Activated CD8-positive, alpha-beta memory T cell treated with anti-CD3 and anti-CD28 coated beads, Interleukin-2, amount 10 ng/mL, durations not matched to agents 7 days and 5 days (primary cell): ENCODE measurements at regions of chr13 and their contacts with region 1.

Region 1: DNA sequence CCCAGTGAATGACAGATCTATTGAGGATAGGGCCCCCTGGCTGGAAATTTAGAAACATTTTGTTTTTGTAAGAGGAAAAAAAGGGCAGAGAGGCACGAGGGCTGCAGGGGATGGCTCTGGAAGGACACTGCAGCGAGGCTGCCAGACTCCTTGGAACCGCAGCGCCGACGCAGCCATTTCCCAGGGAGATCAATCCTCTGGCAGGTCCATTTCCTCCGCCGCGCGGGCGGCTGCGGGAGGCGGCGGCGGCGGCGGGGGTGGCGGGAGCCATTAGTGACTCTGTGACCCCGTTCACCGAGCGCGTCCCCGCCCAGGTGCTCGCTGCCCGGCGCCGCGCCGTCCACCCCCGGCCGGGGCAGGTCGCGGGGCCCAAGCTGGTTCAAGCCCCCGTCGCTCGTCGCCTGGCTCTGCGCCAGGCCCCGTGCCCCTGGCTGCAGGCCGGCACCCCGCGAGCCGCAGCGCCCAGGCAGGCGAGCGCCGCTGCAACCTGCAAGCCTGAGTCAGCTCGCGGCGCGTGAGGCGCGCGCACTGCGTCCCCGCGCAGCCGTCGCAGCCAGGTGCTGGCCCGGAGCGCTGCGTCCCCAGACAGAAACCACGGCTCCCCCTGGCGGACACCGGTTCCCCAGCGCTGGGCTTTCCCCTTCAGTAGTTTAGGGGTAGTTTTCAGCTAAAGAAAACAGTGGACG is 192.6 kb downstream of the KATNAL1 start:
- DNase-seq: peak; percentile 95
- ATAC-seq: peak; percentile 97
- H3K4me3 Mint-ChIP-seq: peak overlapping the region; percentile 71
- H3K27ac Mint-ChIP-seq: peak overlapping the region; percentile 24
- H3K4me1 Mint-ChIP-seq: peaks cover 33% of the 10 kb centered on the region
- H3K27me3 Mint-ChIP-seq: peaks cover 6% of the 10 kb centered on the region

Region 2: DNA sequence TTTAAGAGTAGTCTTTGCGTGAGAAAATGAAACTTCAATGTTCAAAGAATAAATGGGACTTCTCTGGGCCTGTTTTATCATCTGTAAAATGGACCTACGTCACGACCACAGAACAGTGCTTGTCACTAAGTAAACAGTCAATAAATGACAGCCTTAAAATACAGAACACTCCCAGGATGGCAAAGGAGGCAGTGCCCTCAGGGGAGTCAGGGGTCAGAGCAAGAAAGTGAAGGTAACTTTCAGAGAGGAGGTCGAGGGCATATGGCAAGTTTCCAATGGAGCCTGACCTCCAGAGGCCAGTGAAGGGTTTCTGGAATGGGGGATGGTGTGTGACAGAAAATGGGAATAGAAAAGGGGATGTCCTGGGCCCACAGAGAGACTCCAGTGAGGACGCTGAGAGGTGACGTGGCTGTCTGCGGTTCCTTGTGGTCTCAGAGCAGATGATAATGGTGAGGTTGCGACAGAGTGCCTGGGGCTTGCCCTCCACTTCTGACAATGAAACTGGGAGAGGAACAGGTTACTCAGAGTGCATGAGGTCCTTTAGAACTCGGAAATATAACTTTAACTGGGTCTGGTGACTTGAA is 356.1 kb before region 1 on chr13:
- CTCF ChIA-PET with region 1: interaction called, 15 read pairs
- DNase-seq: peak; percentile 80
- ATAC-seq: peak; percentile 84
- H3K4me3 Mint-ChIP-seq: peak overlapping the region; percentile 1
- H3K27ac Mint-ChIP-seq: peak overlapping the region; percentile 63
- H3K4me1 Mint-ChIP-seq: peaks cover 25% of the 10 kb centered on the region
- H3K27me3 Mint-ChIP-seq: peaks cover 2% of the 10 kb centered on the region

Region 3: GRCh38 chr13:29840585-29840984 is 274.1 kb before region 1 on chr13:
- CTCF ChIA-PET with region 1: interaction called, 27 read pairs
- DNase-seq: no peak
- ATAC-seq: no peak
- H3K4me3 Mint-ChIP-seq: no peak overlapping the region
- H3K27ac Mint-ChIP-seq: no peak overlapping the region
- H3K4me1 Mint-ChIP-seq: peaks cover 25% of the 10 kb centered on the region
- H3K27me3 Mint-ChIP-seq: no peaks in the 10 kb centered on the region

Region 4: GRCh38 chr13:29935309-29935981 is 179.3 kb before region 1 on chr13:
- CTCF ChIA-PET with region 1: interaction called, 162 read pairs
- DNase-seq: peak; percentile 96
- ATAC-seq: peak; percentile 90
- H3K4me3 Mint-ChIP-seq: peak overlapping the region; percentile 81
- H3K27ac Mint-ChIP-seq: peak overlapping the region; percentile 92
- H3K4me1 Mint-ChIP-seq: peaks cover 47% of the 10 kb centered on the region
- H3K27me3 Mint-ChIP-seq: no peaks in the 10 kb centered on the region

Region 5: DNA sequence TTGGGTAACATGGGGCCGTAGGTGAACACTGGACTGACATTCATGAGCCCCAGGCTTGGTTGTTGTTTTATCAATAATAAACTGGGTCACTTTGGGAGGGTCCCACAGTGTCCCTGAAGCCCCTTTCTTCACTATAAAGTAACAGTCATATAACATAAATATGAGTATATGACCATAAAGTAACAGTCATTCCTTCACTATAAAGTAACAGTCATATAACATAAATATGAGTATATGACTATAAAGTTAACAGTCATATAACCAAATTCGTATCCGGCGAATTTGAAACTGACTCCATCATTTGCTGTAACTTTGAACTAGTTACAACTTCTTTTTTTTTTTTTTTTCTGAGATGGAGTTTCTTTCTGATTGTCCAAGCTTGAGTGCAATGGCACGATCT is 17.6 kb before region 1 on chr13:
- CTCF ChIA-PET with region 1: interaction called, 10 read pairs
- DNase-seq: no peak
- ATAC-seq: no peak
- H3K4me3 Mint-ChIP-seq: no peak overlapping the region
- H3K27ac Mint-ChIP-seq: no peak overlapping the region
- H3K4me1 Mint-ChIP-seq: no peaks in the 10 kb centered on the region
- H3K27me3 Mint-ChIP-seq: no peaks in the 10 kb centered on the region

Region 6: GRCh38 chr13:30132623-30133553 is 18.2 kb after region 1 on chr13:
- CTCF ChIA-PET with region 1: interaction called, 60 read pairs
- DNase-seq: peak; percentile 98
- ATAC-seq: peak; percentile 99
- H3K4me3 Mint-ChIP-seq: no peak overlapping the region
- H3K27ac Mint-ChIP-seq: peak overlapping the region; percentile 71
- H3K4me1 Mint-ChIP-seq: peaks cover 15% of the 10 kb centered on the region
- H3K27me3 Mint-ChIP-seq: no peaks in the 10 kb centered on the region

Region 7: GRCh38 chr13:30158774-30159445 is 44.2 kb after region 1 on chr13:
- CTCF ChIA-PET with region 1: interaction called, 10 read pairs
- DNase-seq: no peak
- ATAC-seq: peak; percentile 52
- H3K4me3 Mint-ChIP-seq: no peak overlapping the region
- H3K27ac Mint-ChIP-seq: peak overlapping the region; percentile 24
- H3K4me1 Mint-ChIP-seq: peaks cover 37% of the 10 kb centered on the region
- H3K27me3 Mint-ChIP-seq: no peaks in the 10 kb centered on the region

Region 8: GRCh38 chr13:30224732-30225131 is 110.0 kb after region 1 on chr13:
- CTCF ChIA-PET with region 1: no interaction called
- DNase-seq: no peak
- ATAC-seq: no peak
- H3K4me3 Mint-ChIP-seq: no peak overlapping the region
- H3K27ac Mint-ChIP-seq: no peak overlapping the region
- H3K4me1 Mint-ChIP-seq: peaks cover 16% of the 10 kb centered on the region
- H3K27me3 Mint-ChIP-seq: no peaks in the 10 kb centered on the region